HCT116 (cell line): ENCODE measurements at regions of chr14 and their contacts with region 1.

Region 1: GRCh38 chr14:101072945-101073597 is 169.5 kb upstream of the RTL1 start:
- DNase-seq: peak; percentile 92
- ATAC-seq: peak; percentile 99
- H3K4me3 ChIP-seq: peak overlapping the region; percentile 17 to 47; a peak in 3 of 4 replicates
- H3K27ac ChIP-seq: peak overlapping the region; percentile 61
- H3K4me1 ChIP-seq: peaks cover 18 to 27% of the 10 kb centered on the region in 2 experiments
- H3K27me3 ChIP-seq: no peaks in the 10 kb centered on the region
- CTCF ChIP-seq: no peak
- POLR2A ChIP-seq: no peak
- RAD21 ChIP-seq: peak; percentile 42

Region 2: DNA sequence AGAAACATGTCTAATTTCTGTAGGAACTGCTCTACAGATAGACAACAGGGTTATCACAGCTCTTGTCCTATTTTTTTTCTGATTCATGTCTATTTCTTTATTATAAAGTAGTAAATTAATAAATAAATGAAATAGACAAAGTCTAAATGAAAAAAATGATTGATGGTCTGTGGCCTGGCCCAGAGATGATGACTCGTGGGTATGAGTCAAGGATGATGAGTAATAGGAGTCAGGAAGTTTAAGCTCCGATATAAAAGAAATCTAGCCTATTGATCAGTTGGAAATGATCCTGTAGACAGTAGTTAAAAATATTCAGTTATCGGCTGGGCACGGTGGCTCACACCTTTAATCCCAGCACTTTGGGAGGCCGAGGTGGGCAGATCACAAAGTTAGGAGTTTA is 79.0 kb before region 1 on chr14:
- CTCF ChIA-PET with region 1: no interaction called
- POLR2A ChIA-PET with region 1: no interaction called
- RAD21 ChIA-PET with region 1: no interaction called
- intact Hi-C with region 1: loop called (anchors 5 kb)
- DNase-seq: peak; percentile 52
- ATAC-seq: peak; percentile 74
- H3K4me3 ChIP-seq: peak overlapping the region in 1 of 2 experiments; percentile 15; a peak in 1 of 4 replicates
- H3K27ac ChIP-seq: no peak overlapping the region
- H3K4me1 ChIP-seq: peaks cover 5 to 36% of the 10 kb centered on the region in 2 experiments
- H3K27me3 ChIP-seq: no peaks in the 10 kb centered on the region
- CTCF ChIP-seq: no peak
- POLR2A ChIP-seq: no peak
- RAD21 ChIP-seq: no peak